ENCODE measurements at regions of chr1 and their contacts with region 1.

Region 1: DNA sequence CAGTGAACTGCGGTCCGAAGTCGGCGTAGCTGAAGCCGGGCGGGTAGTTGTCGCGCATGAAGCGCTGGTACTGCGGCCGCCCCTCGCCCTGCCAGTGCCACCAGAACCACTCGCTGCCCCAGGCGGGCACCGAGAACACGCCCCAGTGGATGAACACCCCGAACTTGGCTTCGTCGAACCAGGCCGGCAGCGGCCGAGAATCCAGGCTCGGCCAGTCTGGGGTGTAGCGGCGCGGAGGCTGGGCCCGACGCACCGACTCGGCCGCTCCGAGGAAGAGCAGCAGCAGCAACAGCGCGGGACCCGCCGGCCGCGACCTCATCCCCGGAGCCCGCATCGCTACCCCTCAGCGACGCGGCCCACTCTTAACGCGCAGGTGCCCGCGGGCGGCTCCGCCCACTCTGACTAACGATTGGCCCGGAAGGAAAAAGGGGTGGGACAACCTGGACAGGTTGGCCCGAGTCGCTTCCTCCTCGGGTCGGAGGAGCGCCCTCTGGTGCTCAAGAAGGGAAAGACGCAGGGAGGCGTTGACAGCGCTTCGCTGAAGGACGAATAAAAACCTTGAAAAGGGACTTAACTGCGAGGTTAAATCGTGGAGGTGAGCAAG is at the start of gene FUCA1:
- DNase-seq: peak in 1 of 2 donors; percentile 89
- H3K4me3 ChIP-seq: peak within 1 kb of the TSS; percentile 69 to 91
- H3K27ac ChIP-seq: peak within 1 kb of the TSS; percentile 70
- H3K4me1 ChIP-seq: peaks cover 29% of the 10 kb centered on the region
- H3K27me3 ChIP-seq: no peaks in the 10 kb centered on the region
- CTCF ChIP-seq: peak; percentile 76 to 96 (median 90)
- POLR2A ChIP-seq: peak in 1 of 2 donors; percentile 57
- total RNA-seq, gene FUCA1: 10.6 TPM

Region 2: DNA sequence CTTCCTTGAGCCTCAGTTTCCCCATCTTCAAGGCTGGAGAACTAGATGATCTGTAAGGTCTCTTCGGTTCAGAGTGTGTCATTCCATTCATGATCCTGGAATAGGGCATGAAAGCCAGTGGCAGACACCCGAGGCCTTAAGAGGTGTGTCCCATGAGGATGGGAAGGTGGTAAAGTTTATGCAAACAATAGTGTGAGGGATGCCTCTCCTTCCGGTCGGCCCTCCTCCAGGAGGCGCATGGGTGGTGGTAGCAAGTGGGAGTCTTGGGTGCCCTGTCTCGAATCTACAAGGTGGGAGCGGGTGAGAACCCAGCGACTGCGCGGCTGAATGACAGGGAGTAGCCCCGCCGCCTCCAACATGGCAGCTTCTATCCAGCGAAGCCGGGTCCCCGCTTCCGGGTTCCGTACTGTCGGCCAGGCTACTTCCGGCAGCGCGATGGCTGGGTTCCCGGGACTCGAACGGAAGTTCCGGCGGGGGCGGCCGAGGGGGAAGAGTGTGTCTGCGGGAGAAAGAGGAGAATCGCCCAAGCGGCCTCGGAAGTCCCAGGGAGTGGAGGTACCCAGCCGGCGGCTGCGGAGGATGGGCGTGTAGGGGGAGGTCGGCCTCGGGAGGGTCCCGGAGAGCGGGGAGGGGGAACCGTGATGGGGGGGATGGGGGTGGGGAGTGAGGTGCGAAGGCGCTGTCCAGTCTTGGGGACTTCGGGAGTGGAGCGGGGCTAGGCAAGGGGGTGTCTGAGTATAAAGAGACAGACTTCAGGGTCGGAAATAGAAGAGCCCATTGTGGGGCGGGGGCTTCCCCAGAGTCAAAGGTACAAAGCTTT is 77.1 kb before region 1 on chr1 and contains the start of gene LYPLA2:
- intact Hi-C with region 1: loop called (anchors 10 kb)
- DNase-seq: no peak
- H3K4me3 ChIP-seq: peak within 1 kb of the TSS; percentile 86 to 88
- H3K27ac ChIP-seq: peak within 1 kb of the TSS; percentile 83
- H3K4me1 ChIP-seq: peaks cover 33% of the 10 kb centered on the region
- H3K27me3 ChIP-seq: no peaks in the 10 kb centered on the region
- CTCF ChIP-seq: no peak
- POLR2A ChIP-seq: peak in 1 of 2 donors; percentile 5
- total RNA-seq, gene LYPLA2: 56.2 TPM